BJ (cell line): ENCODE measurements at regions of chr14 and their contacts with region 1.

Region 1: GRCh38 chr14:99729991-99730868 is 46.1 kb downstream of the CYP46A1 start:
- DNase-seq: no peak
- H3K4me3 ChIP-seq: peak overlapping the region; percentile 50
- H3K27me3 ChIP-seq: peaks cover 9% of the 10 kb centered on the region
- CTCF ChIP-seq: peak; percentile 75

Region 2: GRCh38 chr14:99752486-99753121 is 22.4 kb after region 1 on chr14:
- CTCF ChIA-PET with region 1: interaction called, 18 read pairs
- POLR2A ChIA-PET with region 1: no interaction called
- DNase-seq: peak; percentile 51
- H3K4me3 ChIP-seq: no peak overlapping the region
- H3K27me3 ChIP-seq: no peaks in the 10 kb centered on the region
- CTCF ChIP-seq: no peak

Region 3: DNA sequence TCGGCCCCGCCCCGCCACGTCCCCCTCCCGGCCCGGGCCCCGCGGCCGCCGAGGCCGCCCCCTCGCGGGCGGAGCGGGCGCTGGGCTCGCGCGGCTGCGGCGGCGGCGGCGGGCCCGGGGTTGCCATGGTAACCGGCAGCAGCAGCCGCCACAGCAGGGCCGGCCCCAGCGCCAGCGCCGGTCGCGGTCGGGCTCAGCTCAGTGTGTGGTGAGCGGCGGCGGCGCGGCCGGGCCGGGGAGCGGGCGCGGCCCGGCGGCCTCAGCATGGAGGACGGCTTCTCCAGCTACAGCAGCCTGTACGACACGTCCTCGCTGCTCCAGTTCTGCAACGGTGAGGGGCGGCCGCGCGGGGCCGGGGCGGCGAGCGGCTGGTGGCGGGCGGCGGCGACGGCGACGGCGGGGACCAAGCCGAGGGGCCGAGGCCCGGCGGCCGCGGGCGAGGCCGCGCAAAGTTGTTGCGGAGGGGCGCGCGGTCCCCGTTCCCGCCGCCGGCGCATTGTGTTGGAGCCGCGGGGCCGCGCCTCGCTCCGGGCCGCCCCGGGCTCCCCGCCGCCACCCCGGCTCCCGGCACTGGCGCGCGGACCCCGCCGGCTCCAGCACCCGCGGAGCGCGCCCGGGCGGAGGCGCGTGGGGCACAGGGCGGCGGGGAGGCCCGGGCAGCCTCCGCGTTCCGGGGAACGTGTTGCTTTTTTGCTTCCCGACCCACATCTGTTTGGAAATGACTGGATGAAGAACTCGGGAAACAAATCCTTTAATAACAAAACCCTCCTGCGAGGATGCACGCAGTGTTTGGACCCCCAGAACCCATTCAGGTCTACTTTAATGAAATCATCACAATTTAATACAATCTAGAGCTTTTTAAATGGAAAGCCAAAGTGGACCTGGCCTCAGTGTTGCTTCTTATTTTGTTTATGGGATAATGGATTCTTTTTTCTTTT is 63.3 kb after region 1 on chr14 and contains the start of gene EML1:
- CTCF ChIA-PET with region 1: interaction called, 38 read pairs
- POLR2A ChIA-PET with region 1: no interaction called
- DNase-seq: no peak
- H3K4me3 ChIP-seq: peak within 1 kb of the TSS; percentile 55
- H3K27me3 ChIP-seq: no peaks in the 10 kb centered on the region
- CTCF ChIP-seq: no peak
- polyA plus RNA-seq, gene EML1: 11.8 and 14.2 TPM in 2 replicates

Region 4: DNA sequence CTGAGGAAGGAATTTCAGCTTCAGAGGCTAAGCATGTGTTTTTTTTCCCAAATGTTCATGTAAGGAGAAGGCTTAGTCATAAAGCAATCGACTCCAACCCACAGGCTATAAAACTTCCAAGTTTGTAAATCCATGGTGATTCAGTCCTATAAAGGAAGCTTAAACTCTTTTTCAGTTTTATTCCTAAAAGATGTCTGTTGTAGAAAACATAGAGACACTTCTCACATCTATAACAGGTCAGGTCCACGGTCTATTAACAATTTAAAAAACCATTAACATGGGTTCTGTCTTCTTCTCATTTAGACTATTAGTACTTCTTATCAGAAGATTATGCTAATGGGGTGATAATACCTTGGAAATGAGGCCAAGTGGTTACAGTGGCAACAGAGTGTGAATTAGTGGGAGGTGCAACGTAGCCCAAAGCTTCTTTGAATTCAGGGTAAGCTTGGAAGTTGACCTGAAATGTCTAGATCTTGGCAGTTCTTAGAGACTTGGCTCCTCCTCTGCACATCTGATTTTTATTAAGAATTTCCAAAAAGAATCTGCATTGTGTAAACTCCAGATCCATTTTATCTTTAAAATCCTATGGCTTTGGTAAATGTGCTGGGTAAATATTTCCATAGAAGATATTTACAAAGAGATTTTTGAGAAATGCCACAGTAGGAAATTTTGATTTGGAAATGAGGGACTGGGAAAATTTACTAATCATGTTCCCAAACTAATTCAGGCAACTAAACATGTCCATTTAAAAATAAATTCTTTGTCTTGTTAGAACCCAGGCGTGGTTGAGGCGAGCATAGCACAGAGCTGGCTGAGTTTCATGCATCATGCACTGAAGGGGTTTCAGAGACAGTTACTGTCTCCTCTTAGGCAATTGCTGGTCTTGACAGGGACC is 149.4 kb after region 1 on chr14:
- CTCF ChIA-PET with region 1: interaction called, 87 read pairs
- POLR2A ChIA-PET with region 1: no interaction called
- DNase-seq: peak; percentile 81
- H3K4me3 ChIP-seq: no peak overlapping the region
- H3K27me3 ChIP-seq: peaks cover 2% of the 10 kb centered on the region; the same call in 1 of the 2 replicates
- CTCF ChIP-seq: no peak

Region 5: DNA sequence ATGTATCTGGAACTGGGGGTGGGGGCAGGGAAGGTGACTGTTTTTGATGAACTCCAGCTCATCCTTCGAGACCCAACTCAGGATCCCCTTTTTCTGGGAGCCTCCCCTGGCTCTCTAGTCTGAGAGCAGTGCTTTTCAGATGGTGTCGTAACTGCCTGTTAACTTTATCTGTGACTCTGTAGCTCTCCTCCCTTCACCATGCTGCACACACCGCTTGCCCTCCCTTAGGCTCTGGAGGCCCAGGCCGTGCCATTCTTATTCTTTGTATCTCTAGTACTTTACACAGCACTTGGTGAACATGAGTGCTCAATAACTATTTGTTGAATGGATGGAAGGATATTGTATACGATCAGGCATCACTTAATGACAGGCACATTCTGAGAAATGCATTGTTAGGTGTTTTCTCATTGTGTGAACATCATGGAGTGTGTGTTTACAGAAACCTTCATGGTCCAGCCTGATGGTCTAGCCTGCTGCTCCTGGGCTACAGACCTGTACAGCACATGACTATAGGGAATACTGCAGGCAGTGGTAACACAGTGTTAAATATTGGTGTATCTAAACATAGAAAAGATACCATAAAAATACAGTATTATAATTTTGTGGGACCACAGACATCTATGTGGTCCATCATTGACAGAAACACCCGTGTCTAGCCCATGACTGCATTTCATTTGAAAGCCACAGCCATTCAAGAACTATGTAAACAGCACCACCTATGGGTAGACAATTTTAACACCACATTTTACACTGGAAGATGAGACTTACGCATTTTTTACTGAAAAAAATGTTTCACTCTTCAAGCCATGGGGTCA is 154.8 kb after region 1 on chr14:
- CTCF ChIA-PET with region 1: interaction called, 87 read pairs
- POLR2A ChIA-PET with region 1: no interaction called
- DNase-seq: no peak
- H3K4me3 ChIP-seq: no peak overlapping the region
- H3K27me3 ChIP-seq: no peaks in the 10 kb centered on the region
- CTCF ChIP-seq: peak; percentile 68